Activated CD8-positive, alpha-beta T cell treated with anti-CD3 and anti-CD28 coated beads for 36 hours (primary cell): ENCODE measurements at regions of chr14 and their contacts with region 1.

Region 1: DNA sequence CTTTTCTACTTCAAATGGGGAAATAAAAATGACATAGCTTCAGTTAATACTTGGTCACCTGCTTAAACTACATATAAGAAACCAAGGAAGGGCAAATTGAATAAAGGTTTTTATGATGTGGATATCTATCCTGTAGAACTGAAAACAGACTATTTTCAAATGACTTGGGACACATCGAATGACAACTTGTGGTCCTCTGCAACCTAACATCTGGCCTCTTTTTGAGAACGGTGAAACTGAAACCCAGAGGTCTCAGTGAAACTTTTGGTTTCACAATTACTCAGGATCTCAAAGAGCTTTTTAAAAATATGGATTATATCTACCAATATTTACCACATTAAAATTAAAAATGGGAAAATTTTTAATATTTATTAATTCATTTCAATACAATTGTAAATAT is 65.2 kb downstream of the PPP2R5E start:
- DNase-seq: peak; percentile 51
- ATAC-seq: peak; percentile 87
- H3K4me3 Mint-ChIP-seq: peak overlapping the region; percentile 8
- H3K27ac Mint-ChIP-seq: peak overlapping the region; percentile 46
- H3K4me1 Mint-ChIP-seq: peaks cover 51% of the 10 kb centered on the region
- H3K27me3 Mint-ChIP-seq: no peaks in the 10 kb centered on the region
- CTCF ChIP-seq: no peak

Region 2: DNA sequence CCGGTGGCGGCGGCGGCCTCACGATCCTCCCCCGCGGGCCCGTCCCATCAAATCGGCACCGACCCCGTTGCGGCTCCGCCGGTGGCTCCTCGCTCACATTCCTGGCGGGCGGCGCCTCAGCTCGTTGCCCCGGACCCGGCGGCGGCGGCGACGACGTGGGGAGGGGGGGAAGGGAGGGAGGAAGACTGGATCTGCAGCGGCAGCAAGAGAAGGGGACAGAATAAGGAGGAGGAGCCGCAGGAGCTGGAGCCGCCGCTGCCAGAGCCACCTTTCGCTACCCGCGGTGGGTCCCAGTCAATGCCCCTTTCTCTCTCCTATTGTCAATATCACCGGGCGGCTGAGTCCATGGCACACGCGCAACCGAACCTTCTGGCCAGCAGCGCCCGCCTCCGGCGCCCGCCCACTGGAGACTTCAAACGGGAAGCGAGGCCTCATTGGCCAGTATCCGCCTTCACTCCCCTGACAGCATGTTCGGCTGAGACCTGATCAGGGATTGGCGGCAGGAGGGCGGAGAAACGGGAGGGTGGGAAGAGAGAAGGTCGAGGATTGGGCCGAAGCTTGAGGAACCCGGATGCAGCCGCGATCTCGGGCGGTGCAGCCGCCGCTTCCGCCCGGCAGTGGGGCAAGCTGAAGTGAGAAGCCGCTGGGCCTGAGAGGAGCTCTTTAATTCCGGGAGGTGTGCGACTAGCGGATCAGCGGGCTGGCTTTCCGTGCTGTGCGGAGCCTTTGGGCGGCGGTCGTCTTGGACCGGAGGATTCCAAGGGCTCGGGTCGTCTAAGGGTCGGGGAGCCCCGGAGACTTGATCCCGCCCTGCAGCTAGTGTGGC is 65.2 kb after region 1 on chr14 and contains the start of gene PPP2R5E:
- CTCF ChIA-PET with region 1: no interaction called
- POLR2A ChIA-PET with region 1: interaction called, 3 read pairs
- intact Hi-C with region 1: loop called (anchors 5 kb)
- DNase-seq: peak; percentile 99
- ATAC-seq: peak; percentile 98
- H3K4me3 Mint-ChIP-seq: peak within 1 kb of the TSS; percentile 96
- H3K27ac Mint-ChIP-seq: peak within 1 kb of the TSS; percentile 85
- H3K4me1 Mint-ChIP-seq: peaks cover 30% of the 10 kb centered on the region
- H3K27me3 Mint-ChIP-seq: no peaks in the 10 kb centered on the region
- CTCF ChIP-seq: no peak
- total RNA-seq, gene PPP2R5E: 39.5 to 39.8 TPM

Region 3: GRCh38 chr14:63555572-63555971 is 77.6 kb after region 1 on chr14:
- CTCF ChIA-PET with region 1: no interaction called
- POLR2A ChIA-PET with region 1: no interaction called
- intact Hi-C with region 1: no loop called
- DNase-seq: no peak
- ATAC-seq: no peak
- H3K4me3 Mint-ChIP-seq: no peak overlapping the region
- H3K27ac Mint-ChIP-seq: no peak overlapping the region
- H3K4me1 Mint-ChIP-seq: peaks cover 7% of the 10 kb centered on the region
- H3K27me3 Mint-ChIP-seq: no peaks in the 10 kb centered on the region
- CTCF ChIP-seq: no peak